A549 (cell line): ENCODE measurements at regions of chr5 and their contacts with region 1.

Region 1: DNA sequence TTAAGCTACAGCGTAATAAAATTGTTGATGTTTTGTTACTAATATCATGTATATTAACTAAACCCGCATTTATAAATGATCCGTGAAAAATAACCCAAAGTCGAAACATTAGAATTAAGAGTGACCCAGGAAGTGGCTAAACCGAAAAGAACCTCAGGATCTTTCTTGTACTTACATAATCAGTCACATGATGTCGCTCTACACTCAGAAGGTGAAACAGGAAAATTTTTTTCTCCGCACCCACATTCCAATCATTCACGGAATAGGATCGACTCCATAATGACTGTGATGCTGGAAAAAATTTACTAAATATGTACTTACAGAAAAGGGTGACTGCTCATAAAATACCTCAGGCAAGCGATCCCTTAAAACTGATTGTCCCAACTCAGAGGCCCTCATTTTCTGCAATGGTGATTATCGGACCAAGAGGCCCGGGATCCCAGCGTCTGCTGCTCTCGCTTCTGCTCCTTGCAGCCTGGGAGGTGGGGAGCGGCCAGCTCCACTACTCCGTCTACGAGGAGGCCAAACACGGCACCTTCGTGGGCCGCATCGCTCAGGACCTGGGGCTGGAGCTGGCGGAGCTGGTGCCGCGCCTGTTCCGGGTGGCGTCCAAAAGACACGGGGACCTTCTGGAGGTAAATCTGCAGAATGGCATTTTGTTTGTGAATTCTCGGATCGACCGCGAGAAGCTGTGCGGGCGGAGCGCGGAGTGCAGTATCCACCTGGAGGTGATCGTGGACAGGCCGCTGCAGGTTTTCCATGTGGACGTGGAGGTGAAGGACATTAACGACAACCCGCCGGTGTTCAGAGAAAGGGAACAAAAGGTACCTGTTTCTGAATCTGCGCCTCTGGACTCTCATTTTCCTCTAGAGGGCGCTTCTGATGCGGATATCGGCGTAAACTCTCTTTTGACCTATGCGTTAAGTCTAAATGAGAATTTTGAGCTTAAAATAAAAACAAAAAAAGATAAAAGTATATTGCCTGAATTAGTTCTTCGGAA is at the start of gene PCDHA12:
- DNase-seq: peak; percentile 67 to 72
- ATAC-seq: peak; percentile 84 to 90
- H3K4me3 ChIP-seq: peak within 1 kb of the TSS; percentile 54
- H3K27ac ChIP-seq: peak within 1 kb of the TSS; percentile 61 to 74
- H3K4me1 ChIP-seq: no peaks in the 10 kb centered on the region
- CTCF ChIP-seq: peak; percentile 68
- EP300 ChIP-seq: no peak
- POLR2A ChIP-seq: no peak
- RAD21 ChIP-seq: peak; percentile 76 to 79
- polyA plus RNA-seq, gene PCDHA12: 2.9 and 3.0 TPM in 2 replicates

Region 2: GRCh38 chr5:140806834-140807775 is 68.3 kb before region 1 on chr5 and contains the start of gene PCDHA4:
- CTCF ChIA-PET with region 1: interaction called, 15 read pairs
- POLR2A ChIA-PET with region 1: no interaction called
- DNase-seq: peak; percentile 24 to 74
- ATAC-seq: peak; percentile 97 to 98
- H3K4me3 ChIP-seq: peak within 1 kb of the TSS; percentile 60
- H3K27ac ChIP-seq: peak within 1 kb of the TSS; percentile 66 to 80
- H3K4me1 ChIP-seq: no peaks in the 10 kb centered on the region
- CTCF ChIP-seq: peak; percentile 66
- EP300 ChIP-seq: no peak
- POLR2A ChIP-seq: no peak
- RAD21 ChIP-seq: peak; percentile 67 to 70
- polyA plus RNA-seq, gene PCDHA4: 2.8 and 3.3 TPM in 2 replicates

Region 3: GRCh38 chr5:140821375-140822280 is 53.7 kb before region 1 on chr5 and contains the start of gene PCDHA5:
- CTCF ChIA-PET with region 1: interaction called, 27 read pairs
- POLR2A ChIA-PET with region 1: no interaction called
- DNase-seq: peak; percentile 69 to 73
- ATAC-seq: peak; percentile 85 to 92
- H3K4me3 ChIP-seq: peak within 1 kb of the TSS; percentile 57
- H3K27ac ChIP-seq: peak within 1 kb of the TSS; percentile 53 to 74
- H3K4me1 ChIP-seq: no peaks in the 10 kb centered on the region
- CTCF ChIP-seq: peak; percentile 63
- EP300 ChIP-seq: no peak
- POLR2A ChIP-seq: no peak
- RAD21 ChIP-seq: peak; percentile 43 to 65; a peak in 4 of 5 replicates
- polyA plus RNA-seq, gene PCDHA5: 0.32 and 0.62 TPM in 2 replicates

Region 4: GRCh38 chr5:140998921-140999410 is 123.6 kb after region 1 on chr5:
- CTCF ChIA-PET with region 1: interaction called, 10 read pairs
- POLR2A ChIA-PET with region 1: no interaction called
- DNase-seq: no peak
- ATAC-seq: no peak
- H3K4me3 ChIP-seq: no peak overlapping the region
- H3K27ac ChIP-seq: no peak overlapping the region
- H3K4me1 ChIP-seq: peaks cover 42% of the 10 kb centered on the region
- CTCF ChIP-seq: no peak
- EP300 ChIP-seq: no peak
- POLR2A ChIP-seq: no peak
- RAD21 ChIP-seq: no peak